Dorsolateral prefrontal cortex (tissue), 120 donors: ENCODE measurements at regions of chr11 and their contacts with region 1.

Region 1: DNA sequence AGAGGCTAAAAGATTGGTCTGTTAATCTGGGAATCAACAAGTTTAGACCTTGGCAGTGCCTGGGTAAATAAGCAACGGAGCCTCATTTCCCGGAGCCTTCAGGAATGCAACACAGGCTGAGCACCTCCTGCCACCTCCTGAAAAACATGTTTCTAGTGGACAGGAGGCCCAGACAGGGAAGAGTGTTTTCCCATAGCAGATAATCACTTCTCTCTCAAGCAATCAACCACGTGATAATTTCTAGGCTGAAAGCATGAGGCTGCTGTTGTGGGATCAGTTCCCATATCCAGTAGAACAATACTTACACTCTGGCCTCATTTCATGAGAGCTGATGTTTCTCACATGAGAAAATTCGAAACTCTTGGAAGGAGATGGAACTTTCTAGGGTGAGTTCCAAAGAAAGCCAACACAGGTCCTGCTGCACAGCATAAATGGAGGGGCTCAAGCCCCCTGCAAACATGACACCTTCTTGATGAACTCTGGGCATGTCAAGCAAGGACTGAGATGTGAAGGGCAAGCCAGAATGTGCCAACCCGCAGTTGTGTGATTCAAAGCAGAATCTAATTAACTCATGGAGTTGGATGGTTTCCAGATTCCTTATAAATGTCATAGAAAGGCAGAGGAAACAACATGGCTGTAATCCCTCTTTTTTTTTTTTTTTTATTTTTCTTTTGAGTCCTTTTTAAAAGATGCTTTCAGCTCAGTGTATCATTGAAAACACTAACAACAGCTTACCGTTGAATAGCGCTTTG is 228.5 kb upstream of the SESN3 start:
- DNase-seq: no peak
- H3K4me3 ChIP-seq: no peak overlapping the region
- H3K27ac ChIP-seq: peak overlapping the region in 3 of 59 donors; percentile 4 to 32 (median 25)
- H3K27me3 ChIP-seq: no peaks in the 10 kb centered on the region
- CTCF ChIP-seq: no peak

Region 2: DNA sequence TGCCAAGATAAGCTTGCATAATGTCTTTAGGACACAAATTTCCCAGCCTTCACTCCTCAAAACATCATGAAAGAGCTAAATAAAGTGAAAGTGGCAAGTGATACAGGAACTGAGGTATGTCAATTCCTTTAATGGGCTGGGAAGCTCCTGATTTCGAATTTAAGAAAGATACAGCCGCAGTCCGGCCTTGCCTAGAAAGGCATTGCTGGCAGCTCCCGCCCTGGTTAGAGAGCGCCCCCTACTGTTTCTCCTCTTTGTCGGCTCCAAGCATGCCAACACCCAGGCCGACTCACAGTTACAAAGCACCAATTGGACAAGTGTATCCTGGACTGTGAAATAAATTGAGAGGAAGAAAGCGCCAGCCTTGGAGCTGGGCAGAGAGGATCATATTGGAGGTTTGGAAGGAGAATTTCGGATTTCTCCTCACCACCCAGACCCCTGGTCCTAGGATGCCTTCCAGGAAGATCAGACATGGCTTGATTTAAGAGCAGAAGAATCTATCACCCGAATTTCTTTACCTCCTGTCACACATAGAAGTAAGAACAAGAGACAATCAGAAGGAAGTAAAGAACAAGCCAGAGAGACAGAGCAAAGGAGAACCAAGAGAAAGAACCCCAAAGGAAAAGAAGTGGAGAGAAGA is 246.1 kb after region 1 on chr11:
- intact Hi-C with region 1: loop called in 1 of 2 experiments (anchors 5 kb)
- DNase-seq: peak; percentile 68 to 91 (median 86)
- H3K4me3 ChIP-seq: peak overlapping the region in 5 of 59 donors; percentile 6 to 32 (median 15)
- H3K27ac ChIP-seq: peak overlapping the region in 55 of 59 donors; percentile 2 to 93 (median 57)
- H3K27me3 ChIP-seq: no peaks in the 10 kb centered on the region
- CTCF ChIP-seq: peak; percentile 77 to 97 (median 94)